ENCODE measurements at regions of chr12 and their contacts with region 1.

Region 1: DNA sequence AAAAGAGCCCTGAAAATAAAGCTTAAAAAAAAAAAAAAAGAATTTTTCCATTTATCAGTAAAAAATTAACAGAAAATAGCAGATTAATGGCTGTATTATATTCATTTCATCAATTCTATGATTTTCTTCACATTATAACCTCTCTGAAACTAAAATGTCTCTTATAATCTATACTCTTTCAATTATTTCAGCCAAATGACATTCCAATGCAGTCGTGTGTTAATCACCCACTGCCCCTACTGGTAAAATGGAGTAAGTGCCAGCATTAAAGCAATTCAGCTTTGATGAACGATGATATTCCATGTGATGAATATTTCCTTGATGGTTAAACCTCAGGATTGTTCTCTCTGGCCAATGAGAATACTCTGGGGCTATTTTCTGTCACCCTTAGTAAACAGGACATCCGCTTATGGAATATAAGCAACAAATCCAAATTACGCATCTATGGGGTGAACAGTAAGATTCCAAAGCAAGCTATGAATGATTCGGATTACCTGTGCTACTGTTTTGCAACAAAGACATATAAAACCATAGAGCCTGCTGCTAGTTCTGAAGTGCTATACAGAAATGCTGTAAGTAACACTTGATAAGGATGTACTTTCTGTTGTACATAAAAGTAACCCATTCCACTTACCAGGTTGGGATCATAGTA is 20.3 kb upstream of the SYCP3 start:
- DNase-seq: no peak
- ATAC-seq: peak; percentile 79
- H3K4me3 Mint-ChIP-seq: no peak overlapping the region
- H3K27ac Mint-ChIP-seq: no peak overlapping the region
- H3K4me1 Mint-ChIP-seq: peaks cover 18% of the 10 kb centered on the region
- H3K27me3 Mint-ChIP-seq: no peaks in the 10 kb centered on the region
- CTCF ChIP-seq: peak; percentile 50

Region 2: GRCh38 chr12:101414533-101415119 is 344.9 kb before region 1 on chr12:
- CTCF ChIA-PET with region 1: interaction called, 34 read pairs
- POLR2A ChIA-PET with region 1: no interaction called
- intact Hi-C with region 1: loop called (anchors 1 kb)
- DNase-seq: no peak
- ATAC-seq: no peak
- H3K4me3 Mint-ChIP-seq: no peak overlapping the region
- H3K27ac Mint-ChIP-seq: no peak overlapping the region
- H3K4me1 Mint-ChIP-seq: no peaks in the 10 kb centered on the region
- H3K27me3 Mint-ChIP-seq: no peaks in the 10 kb centered on the region
- CTCF ChIP-seq: peak; percentile 24

Region 3: GRCh38 chr12:101490286-101490920 is 269.1 kb before region 1 on chr12:
- CTCF ChIA-PET with region 1: interaction called, 3 read pairs
- POLR2A ChIA-PET with region 1: no interaction called
- intact Hi-C with region 1: loop called (anchors 1 kb)
- DNase-seq: no peak
- ATAC-seq: peak; percentile 61
- H3K4me3 Mint-ChIP-seq: no peak overlapping the region
- H3K27ac Mint-ChIP-seq: no peak overlapping the region
- H3K4me1 Mint-ChIP-seq: no peaks in the 10 kb centered on the region
- H3K27me3 Mint-ChIP-seq: peaks cover 12% of the 10 kb centered on the region
- CTCF ChIP-seq: no peak

Region 4: DNA sequence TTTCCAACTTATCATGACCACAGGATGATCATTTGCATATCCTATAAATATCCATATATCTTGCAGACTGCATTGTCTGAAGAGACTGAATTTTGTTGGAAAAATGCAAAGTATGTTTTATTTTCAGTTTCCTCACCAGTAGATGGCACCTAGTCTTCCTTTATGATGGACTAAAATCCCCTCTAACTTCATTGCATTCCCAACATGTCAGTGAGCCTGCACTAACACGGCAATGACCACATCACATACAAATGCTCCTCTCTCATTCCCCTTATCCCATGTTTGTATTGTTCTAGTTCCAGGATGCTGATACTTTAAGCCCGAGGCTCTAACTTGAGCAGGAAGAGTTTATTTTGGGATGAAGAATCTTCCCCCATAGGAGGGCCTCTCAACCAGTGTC is 189.5 kb before region 1 on chr12:
- CTCF ChIA-PET with region 1: interaction called, 18 read pairs
- POLR2A ChIA-PET with region 1: no interaction called
- intact Hi-C with region 1: loop called (anchors 1 kb)
- DNase-seq: no peak
- ATAC-seq: peak; percentile 34
- H3K4me3 Mint-ChIP-seq: no peak overlapping the region
- H3K27ac Mint-ChIP-seq: no peak overlapping the region
- H3K4me1 Mint-ChIP-seq: peaks cover 4% of the 10 kb centered on the region
- H3K27me3 Mint-ChIP-seq: peaks cover 7% of the 10 kb centered on the region
- CTCF ChIP-seq: no peak

Region 5: DNA sequence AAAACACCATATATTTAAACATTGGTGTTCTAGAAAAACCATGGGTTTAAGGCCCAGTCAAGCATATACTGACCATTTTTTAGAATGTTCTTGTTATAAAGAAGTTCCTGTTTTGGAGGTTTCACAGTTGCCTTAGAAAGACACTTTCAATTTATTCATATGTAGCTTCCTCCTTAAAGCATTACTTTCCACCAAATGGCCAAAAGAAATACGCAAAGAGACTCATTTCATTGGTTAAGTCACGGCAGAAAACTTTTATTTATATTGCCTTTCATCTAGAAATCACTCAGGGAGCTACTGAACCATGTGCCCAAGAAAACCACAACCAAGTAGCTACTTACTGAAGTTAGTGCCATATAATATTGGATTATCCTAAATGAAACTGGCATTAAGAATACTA is 124.8 kb before region 1 on chr12:
- CTCF ChIA-PET with region 1: no interaction called
- POLR2A ChIA-PET with region 1: no interaction called
- intact Hi-C with region 1: loop called (anchors 5 kb)
- DNase-seq: no peak
- ATAC-seq: peak; percentile 92
- H3K4me3 Mint-ChIP-seq: peak overlapping the region; percentile 69
- H3K27ac Mint-ChIP-seq: peak overlapping the region; percentile 94
- H3K4me1 Mint-ChIP-seq: peaks cover 41% of the 10 kb centered on the region
- H3K27me3 Mint-ChIP-seq: no peaks in the 10 kb centered on the region
- CTCF ChIP-seq: no peak

Region 6: DNA sequence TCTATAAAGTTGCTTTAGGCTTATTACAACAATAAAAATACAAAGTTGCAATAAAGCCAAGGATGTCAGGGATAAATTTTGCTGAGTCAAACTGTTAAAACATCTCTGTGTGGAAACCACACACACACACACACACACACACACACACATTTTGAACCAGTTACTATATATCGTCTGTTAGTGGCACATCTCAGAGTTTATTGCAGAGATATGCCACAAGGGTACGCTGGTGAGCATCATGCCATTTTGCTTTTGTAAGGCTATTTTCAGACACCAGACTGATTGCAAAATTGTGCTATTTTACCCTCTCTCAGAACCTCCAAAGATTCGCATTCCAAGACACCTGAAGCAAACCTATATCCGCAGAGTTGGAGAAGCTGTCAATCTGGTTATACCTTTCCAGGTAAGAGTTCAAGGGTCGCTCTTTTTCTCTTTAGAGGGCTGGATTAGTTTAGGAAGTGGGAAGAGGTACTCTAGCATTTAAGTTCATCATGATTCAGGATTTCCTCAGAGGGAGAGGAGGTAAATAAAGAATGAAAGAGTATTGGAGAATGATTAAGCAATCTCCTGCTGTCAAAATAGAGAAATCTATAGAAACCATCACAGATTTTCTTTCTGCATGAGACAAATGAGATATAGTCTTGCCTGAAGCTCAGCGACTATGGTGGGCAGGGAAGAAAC is 89.4 kb before region 1 on chr12:
- CTCF ChIA-PET with region 1: interaction called, 8 read pairs
- POLR2A ChIA-PET with region 1: no interaction called
- intact Hi-C with region 1: loop called (anchors 1 kb)
- DNase-seq: no peak
- ATAC-seq: peak; percentile 53
- H3K4me3 Mint-ChIP-seq: no peak overlapping the region
- H3K27ac Mint-ChIP-seq: no peak overlapping the region
- H3K4me1 Mint-ChIP-seq: peaks cover 21% of the 10 kb centered on the region
- H3K27me3 Mint-ChIP-seq: no peaks in the 10 kb centered on the region
- CTCF ChIP-seq: no peak

Region 7: GRCh38 chr12:101743724-101744472 is 15.6 kb before region 1 on chr12:
- CTCF ChIA-PET with region 1: interaction called, 16 read pairs
- POLR2A ChIA-PET with region 1: interaction called, 10 read pairs
- intact Hi-C with region 1: loop called (anchors 1 kb)
- DNase-seq: peak; percentile 54
- ATAC-seq: peak; percentile 88
- H3K4me3 Mint-ChIP-seq: peak overlapping the region; percentile 36
- H3K27ac Mint-ChIP-seq: peak overlapping the region; percentile 96
- H3K4me1 Mint-ChIP-seq: peaks cover 69% of the 10 kb centered on the region
- H3K27me3 Mint-ChIP-seq: no peaks in the 10 kb centered on the region
- CTCF ChIP-seq: no peak

Region 8: GRCh38 chr12:101857043-101857558 is 97.6 kb after region 1 on chr12:
- CTCF ChIA-PET with region 1: no interaction called
- POLR2A ChIA-PET with region 1: no interaction called
- intact Hi-C with region 1: no loop called
- DNase-seq: no peak
- ATAC-seq: no peak
- H3K4me3 Mint-ChIP-seq: no peak overlapping the region
- H3K27ac Mint-ChIP-seq: no peak overlapping the region
- H3K4me1 Mint-ChIP-seq: peaks cover 47% of the 10 kb centered on the region
- H3K27me3 Mint-ChIP-seq: no peaks in the 10 kb centered on the region
- CTCF ChIP-seq: no peak

Region 9: DNA sequence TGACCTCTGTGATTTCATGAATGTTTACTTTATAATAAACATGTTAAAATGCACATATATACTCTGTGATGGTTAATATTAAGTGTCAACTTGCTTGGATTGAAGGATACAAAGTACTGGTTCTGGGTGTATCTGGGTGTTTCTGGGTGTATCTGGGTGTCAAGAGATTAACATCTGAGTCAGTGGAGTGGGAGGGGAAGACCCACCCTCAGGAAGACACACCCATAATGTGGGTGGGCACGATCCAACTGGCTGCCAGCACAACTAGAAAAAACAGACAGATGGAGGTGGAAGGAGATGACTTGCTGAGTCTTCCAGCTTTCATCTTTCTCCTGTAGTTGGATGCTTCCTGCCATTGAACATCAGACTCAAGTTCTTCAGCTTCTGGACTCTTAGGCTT is 348.4 kb after region 1 on chr12:
- CTCF ChIA-PET with region 1: no interaction called
- POLR2A ChIA-PET with region 1: no interaction called
- intact Hi-C with region 1: no loop called
- DNase-seq: no peak
- ATAC-seq: no peak
- H3K4me3 Mint-ChIP-seq: no peak overlapping the region
- H3K27ac Mint-ChIP-seq: no peak overlapping the region
- H3K4me1 Mint-ChIP-seq: peaks cover 5% of the 10 kb centered on the region
- H3K27me3 Mint-ChIP-seq: no peaks in the 10 kb centered on the region
- CTCF ChIP-seq: no peak

Measured in activated B cell treated with CpG ODN at 0.5 μM for 24 hours (primary cell).